CD8-positive, alpha-beta T cell (primary cell): ENCODE measurements at regions of chr6 and their contacts with region 1.

Region 1: GRCh38 chr6:51753635-51754034 is 333.8 kb downstream of the PKHD1 start:
- DNase-seq: no peak
- ATAC-seq: no peak
- H3K4me3 ChIP-seq: no peak overlapping the region
- H3K4me3 Mint-ChIP-seq: no peak overlapping the region
- H3K27ac ChIP-seq: no peak overlapping the region
- H3K27ac Mint-ChIP-seq: no peak overlapping the region
- H3K4me1 ChIP-seq: no peaks in the 10 kb centered on the region
- H3K4me1 Mint-ChIP-seq: no peaks in the 10 kb centered on the region
- H3K27me3 ChIP-seq: no peaks in the 10 kb centered on the region
- H3K27me3 Mint-ChIP-seq: no peaks in the 10 kb centered on the region
- CTCF ChIP-seq: no peak

Region 2: GRCh38 chr6:51548845-51549244 is 204.8 kb before region 1 on chr6:
- CTCF ChIA-PET with region 1: no interaction called
- POLR2A ChIA-PET with region 1: no interaction called
- intact Hi-C with region 1: loop called in 1 of 2 experiments (anchors 5 kb)
- DNase-seq: no peak
- ATAC-seq: no peak
- H3K4me3 ChIP-seq: no peak overlapping the region
- H3K4me3 Mint-ChIP-seq: no peak overlapping the region
- H3K27ac ChIP-seq: no peak overlapping the region
- H3K27ac Mint-ChIP-seq: no peak overlapping the region
- H3K4me1 ChIP-seq: no peaks in the 10 kb centered on the region
- H3K4me1 Mint-ChIP-seq: no peaks in the 10 kb centered on the region
- H3K27me3 ChIP-seq: no peaks in the 10 kb centered on the region
- H3K27me3 Mint-ChIP-seq: peaks cover 3% of the 10 kb centered on the region
- CTCF ChIP-seq: no peak